Endothelial cell of umbilical vein (primary cell): ENCODE measurements at regions of chr1 and their contacts with region 1.

Region 1: DNA sequence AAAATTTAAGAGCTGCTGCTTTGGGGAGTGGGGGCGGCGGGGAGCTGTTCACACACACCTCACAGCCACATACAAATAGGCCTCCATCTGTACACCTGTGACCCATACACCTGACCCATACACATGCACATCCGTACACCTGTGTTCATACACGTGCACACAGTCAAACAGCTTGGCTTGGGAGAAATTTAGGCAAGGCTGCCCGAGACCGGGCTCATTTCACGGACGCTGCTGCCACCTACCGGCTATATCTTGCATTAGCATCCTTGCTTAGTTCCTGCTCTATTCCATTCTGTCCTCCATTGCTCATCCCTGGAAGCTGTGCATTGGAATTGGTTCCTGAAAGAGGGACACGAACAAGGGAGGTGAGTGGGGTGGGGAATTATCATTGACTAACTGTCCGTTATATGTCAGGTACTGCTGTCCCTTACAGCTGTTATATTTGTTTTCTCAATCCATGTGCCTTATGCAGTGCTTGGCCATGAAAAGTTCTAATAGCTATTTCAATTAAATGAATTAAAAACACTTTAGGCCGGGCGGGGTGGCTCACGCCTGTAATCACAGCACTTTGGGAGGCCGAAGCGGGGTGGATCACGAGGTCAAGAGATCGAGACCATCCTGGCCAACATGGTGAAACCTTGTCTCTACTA is 37.1 kb upstream of the EPB41 start:
- DNase-seq: peak; percentile 73
- H3K4me3 ChIP-seq: no peak overlapping the region
- H3K27ac ChIP-seq: no peak overlapping the region
- H3K4me1 ChIP-seq: no peaks in the 10 kb centered on the region
- H3K27me3 ChIP-seq: no peaks in the 10 kb centered on the region
- CTCF ChIP-seq: peak; percentile 86 to 92
- POLR2A ChIP-seq: no peak

Region 2: GRCh38 chr1:28359592-28360239 is 517.5 kb before region 1 on chr1:
- CTCF ChIA-PET with region 1: interaction called, 33 read pairs
- POLR2A ChIA-PET with region 1: no interaction called
- dilution Hi-C with region 1: no loop called
- intact Hi-C with region 1: loop called (anchors 1 kb)
- DNase-seq: peak; percentile 73
- H3K4me3 ChIP-seq: no peak overlapping the region
- H3K27ac ChIP-seq: no peak overlapping the region
- H3K4me1 ChIP-seq: no peaks in the 10 kb centered on the region
- H3K27me3 ChIP-seq: no peaks in the 10 kb centered on the region
- CTCF ChIP-seq: peak; percentile 56 to 64
- POLR2A ChIP-seq: no peak

Region 3: GRCh38 chr1:28613175-28613574 is 264.1 kb before region 1 on chr1:
- CTCF ChIA-PET with region 1: interaction called, 12 read pairs
- POLR2A ChIA-PET with region 1: no interaction called
- dilution Hi-C with region 1: no loop called
- intact Hi-C with region 1: no loop called
- DNase-seq: no peak
- H3K4me3 ChIP-seq: no peak overlapping the region
- H3K27ac ChIP-seq: no peak overlapping the region
- H3K4me1 ChIP-seq: no peaks in the 10 kb centered on the region
- H3K27me3 ChIP-seq: no peaks in the 10 kb centered on the region
- CTCF ChIP-seq: no peak
- POLR2A ChIP-seq: no peak

Region 4: GRCh38 chr1:28736450-28737306 is 140.6 kb before region 1 on chr1 and contains the start of gene YTHDF2:
- CTCF ChIA-PET with region 1: interaction called, 26 read pairs
- POLR2A ChIA-PET with region 1: no interaction called
- dilution Hi-C with region 1: no loop called
- intact Hi-C with region 1: no loop called
- DNase-seq: peak; percentile 95
- H3K4me3 ChIP-seq: peak within 1 kb of the TSS; percentile 82 to 95 (median 92)
- H3K27ac ChIP-seq: peak within 1 kb of the TSS; percentile 85
- H3K4me1 ChIP-seq: peaks cover 29% of the 10 kb centered on the region
- H3K27me3 ChIP-seq: no peaks in the 10 kb centered on the region
- CTCF ChIP-seq: peak; percentile 95
- POLR2A ChIP-seq: peak; percentile 61
- total RNA-seq, gene YTHDF2: 101 and 105 TPM in 2 replicates

Region 5: GRCh38 chr1:28766532-28767183 is 110.6 kb before region 1 on chr1:
- CTCF ChIA-PET with region 1: no interaction called
- POLR2A ChIA-PET with region 1: no interaction called
- dilution Hi-C with region 1: no loop called
- intact Hi-C with region 1: no loop called
- DNase-seq: no peak
- H3K4me3 ChIP-seq: no peak overlapping the region
- H3K27ac ChIP-seq: no peak overlapping the region
- H3K4me1 ChIP-seq: no peaks in the 10 kb centered on the region
- H3K27me3 ChIP-seq: no peaks in the 10 kb centered on the region
- CTCF ChIP-seq: no peak
- POLR2A ChIP-seq: no peak

Region 6: DNA sequence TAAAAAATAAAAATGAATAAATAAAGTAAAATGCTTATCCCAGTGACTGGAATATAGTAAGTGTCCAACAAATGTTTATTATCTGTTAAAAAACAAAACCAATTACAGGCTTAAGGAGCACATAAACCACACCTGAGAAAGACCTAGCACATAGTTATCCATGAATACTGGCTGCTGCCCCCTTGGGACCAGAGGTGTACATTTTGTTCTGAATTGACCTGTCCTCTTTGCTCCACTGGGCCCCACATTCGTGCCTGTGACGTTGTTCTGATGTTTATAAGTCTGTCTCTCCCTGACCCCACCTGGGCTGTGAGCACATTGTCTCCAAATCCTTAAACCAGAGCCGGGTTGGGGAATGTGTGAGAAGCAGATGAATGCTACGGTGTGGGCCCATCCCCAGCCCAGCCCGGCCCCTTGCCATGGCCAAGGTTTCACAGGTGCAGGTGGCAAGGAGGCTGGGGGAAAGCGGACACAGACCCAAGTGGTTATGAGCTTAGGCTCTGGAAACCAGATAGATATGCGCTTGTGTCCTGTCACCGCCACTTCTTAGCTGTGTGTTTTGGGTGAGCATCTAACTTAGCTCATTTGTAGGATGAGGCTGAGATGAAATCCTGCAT is 36.2 kb before region 1 on chr1:
- CTCF ChIA-PET with region 1: interaction called, 11 read pairs
- POLR2A ChIA-PET with region 1: no interaction called
- dilution Hi-C with region 1: no loop called
- intact Hi-C with region 1: no loop called
- DNase-seq: no peak
- H3K4me3 ChIP-seq: no peak overlapping the region
- H3K27ac ChIP-seq: no peak overlapping the region
- H3K4me1 ChIP-seq: no peaks in the 10 kb centered on the region
- H3K27me3 ChIP-seq: peaks cover 0 to 8% of the 10 kb centered on the region in 2 experiments
- CTCF ChIP-seq: no peak
- POLR2A ChIP-seq: no peak

Region 7: GRCh38 chr1:28965271-28965870 is 88.1 kb after region 1 on chr1:
- CTCF ChIA-PET with region 1: no interaction called
- POLR2A ChIA-PET with region 1: no interaction called
- dilution Hi-C with region 1: no loop called
- intact Hi-C with region 1: no loop called
- DNase-seq: no peak
- H3K4me3 ChIP-seq: no peak overlapping the region
- H3K27ac ChIP-seq: no peak overlapping the region
- H3K4me1 ChIP-seq: no peaks in the 10 kb centered on the region
- H3K27me3 ChIP-seq: no peaks in the 10 kb centered on the region
- CTCF ChIP-seq: no peak
- POLR2A ChIP-seq: no peak

Region 8: GRCh38 chr1:29011775-29012174 is 134.5 kb after region 1 on chr1:
- CTCF ChIA-PET with region 1: no interaction called
- POLR2A ChIA-PET with region 1: no interaction called
- dilution Hi-C with region 1: no loop called
- intact Hi-C with region 1: no loop called
- DNase-seq: no peak
- H3K4me3 ChIP-seq: no peak overlapping the region
- H3K27ac ChIP-seq: no peak overlapping the region
- H3K4me1 ChIP-seq: no peaks in the 10 kb centered on the region
- H3K27me3 ChIP-seq: no peaks in the 10 kb centered on the region
- CTCF ChIP-seq: no peak
- POLR2A ChIP-seq: no peak

Region 9: GRCh38 chr1:29043274-29043965 is 166.2 kb after region 1 on chr1:
- CTCF ChIA-PET with region 1: interaction called, 16 read pairs
- POLR2A ChIA-PET with region 1: no interaction called
- dilution Hi-C with region 1: no loop called
- intact Hi-C with region 1: no loop called
- DNase-seq: no peak
- H3K4me3 ChIP-seq: no peak overlapping the region
- H3K27ac ChIP-seq: no peak overlapping the region
- H3K4me1 ChIP-seq: peaks cover 5% of the 10 kb centered on the region
- H3K27me3 ChIP-seq: no peaks in the 10 kb centered on the region
- CTCF ChIP-seq: no peak
- POLR2A ChIP-seq: no peak